MCF 10A (cell line): ENCODE measurements at regions of chr2 and their contacts with region 1.

Region 1: DNA sequence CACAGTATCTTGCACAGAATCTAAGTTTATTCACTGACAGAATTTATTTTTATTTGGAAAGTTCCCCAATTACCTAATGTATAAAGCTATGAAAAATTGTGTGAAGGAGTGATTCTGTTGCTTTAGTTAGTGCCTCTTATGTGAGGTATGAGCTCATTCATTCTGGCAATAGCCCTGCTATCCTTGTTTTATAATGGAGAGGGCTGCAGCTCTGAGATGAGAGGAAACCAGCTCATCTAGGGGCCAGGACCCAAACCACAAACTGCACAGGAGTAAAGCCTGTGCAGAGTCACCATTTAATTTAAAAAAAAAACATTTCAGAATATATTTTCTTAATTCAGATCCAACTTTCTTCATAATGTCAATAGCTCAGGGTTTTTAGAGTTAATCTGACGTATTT is 383.0 kb downstream of the TMEM182 start:
- DNase-seq: no peak
- H3K4me3 Mint-ChIP-seq: no peak overlapping the region
- H3K27ac Mint-ChIP-seq: no peak overlapping the region
- H3K4me1 Mint-ChIP-seq: no peaks in the 10 kb centered on the region
- H3K27me3 Mint-ChIP-seq: peaks cover 59% of the 10 kb centered on the region
- CTCF ChIP-seq: no peak

Region 2: DNA sequence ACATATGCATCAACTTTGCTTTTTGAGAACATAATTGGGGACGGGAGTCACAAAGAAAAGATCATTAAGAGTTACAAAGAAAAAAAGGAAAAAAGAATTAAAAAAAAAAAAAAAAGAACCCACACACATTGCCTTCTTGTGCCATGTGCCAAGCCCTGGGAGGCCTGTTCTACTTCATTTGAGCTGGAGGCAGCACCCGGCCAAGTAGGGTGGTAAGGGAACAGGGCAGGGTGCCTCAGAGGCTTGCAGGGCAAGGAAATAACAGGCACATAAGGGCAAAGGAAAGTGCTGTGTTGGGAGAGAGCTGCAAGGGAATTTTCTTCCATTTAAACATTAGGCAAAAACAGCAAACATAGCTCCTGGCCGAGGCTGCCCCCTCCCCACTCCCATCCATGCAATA is 35.0 kb after region 1 on chr2:
- CTCF ChIA-PET with region 1: no interaction called
- POLR2A ChIA-PET with region 1: no interaction called
- intact Hi-C with region 1: loop called (anchors 1 kb)
- DNase-seq: no peak
- H3K4me3 Mint-ChIP-seq: no peak overlapping the region
- H3K27ac Mint-ChIP-seq: no peak overlapping the region
- H3K4me1 Mint-ChIP-seq: peaks cover 6% of the 10 kb centered on the region
- H3K27me3 Mint-ChIP-seq: peaks cover 86% of the 10 kb centered on the region
- CTCF ChIP-seq: no peak